Ovary (tissue), 10 donors: ENCODE measurements at regions of chr4 and their contacts with region 1.

Region 1: GRCh38 chr4:99324979-99325378 is 3.8 kb upstream of the ADH1B start:
- DNase-seq: peak; percentile 70 to 87 (median 81)
- H3K4me3 ChIP-seq: no peak overlapping the region
- H3K27ac ChIP-seq: peak overlapping the region in 1 of 2 donors; percentile 73
- H3K4me1 ChIP-seq: peaks cover 14% of the 10 kb centered on the region
- H3K27me3 ChIP-seq: no peaks in the 10 kb centered on the region
- CTCF ChIP-seq: no peak
- EP300 ChIP-seq: peak; percentile 52
- POLR2A ChIP-seq: no peak

Region 2: DNA sequence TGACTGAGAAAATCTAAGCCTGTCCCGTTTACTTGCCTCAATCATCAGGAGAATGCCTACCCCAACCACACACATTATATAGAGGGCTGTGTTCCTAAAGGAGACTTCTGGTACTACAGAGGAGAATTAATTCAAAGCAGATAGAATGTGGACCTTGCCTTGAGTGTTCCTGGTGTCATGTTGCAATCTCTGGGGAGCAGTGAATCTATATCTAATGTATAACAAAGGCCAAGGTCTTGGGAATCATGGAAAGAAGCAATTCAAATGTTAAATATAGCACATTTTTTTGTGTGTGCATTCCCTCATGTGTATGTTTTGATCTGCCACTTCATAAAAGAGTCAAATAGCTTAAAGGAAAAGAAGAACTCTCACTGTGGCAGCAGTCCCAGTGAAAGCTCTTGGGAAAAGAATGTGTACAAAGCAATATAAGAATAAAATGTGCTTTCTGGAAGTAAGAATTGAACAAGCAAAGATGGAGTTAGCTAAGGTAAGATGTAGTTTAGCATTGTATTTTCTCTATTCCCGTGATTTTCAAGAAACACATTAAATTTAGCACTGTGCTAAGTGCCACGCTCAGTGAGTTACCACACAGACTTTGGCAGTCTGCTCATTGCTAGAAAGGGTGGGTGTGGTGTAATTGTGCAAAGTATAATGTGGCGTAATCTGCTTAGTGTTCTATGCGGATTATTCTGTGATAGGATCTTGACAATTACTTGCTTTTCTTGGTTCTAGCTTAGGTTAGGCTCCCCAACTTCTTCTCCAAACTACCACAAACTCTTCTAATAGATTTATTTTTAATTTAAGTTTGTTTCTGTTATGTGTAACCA is 119.6 kb before region 1 on chr4:
- intact Hi-C with region 1: loop called in 1 of 4 experiments (anchors 10 kb)
- DNase-seq: peak in 2 of 5 donors; percentile 16 to 47
- H3K4me3 ChIP-seq: no peak overlapping the region
- H3K27ac ChIP-seq: no peak overlapping the region
- H3K4me1 ChIP-seq: peaks cover 7% of the 10 kb centered on the region
- H3K27me3 ChIP-seq: no peaks in the 10 kb centered on the region
- CTCF ChIP-seq: no peak
- EP300 ChIP-seq: no peak
- POLR2A ChIP-seq: no peak

Region 3: GRCh38 chr4:99352602-99353537 is 27.9 kb after region 1 on chr4 and contains the start of gene ADH1C:
- intact Hi-C with region 1: no loop called
- DNase-seq: no peak
- H3K4me3 ChIP-seq: peak within 1 kb of the TSS; percentile 0
- H3K27ac ChIP-seq: peak within 1 kb of the TSS in 1 of 2 donors; percentile 18
- H3K4me1 ChIP-seq: peaks cover 8% of the 10 kb centered on the region
- H3K27me3 ChIP-seq: no peaks in the 10 kb centered on the region
- CTCF ChIP-seq: no peak
- EP300 ChIP-seq: no peak
- POLR2A ChIP-seq: no peak
- total RNA-seq, gene ADH1C: 1.5 to 21.6 (median 7.0) TPM

Region 4: DNA sequence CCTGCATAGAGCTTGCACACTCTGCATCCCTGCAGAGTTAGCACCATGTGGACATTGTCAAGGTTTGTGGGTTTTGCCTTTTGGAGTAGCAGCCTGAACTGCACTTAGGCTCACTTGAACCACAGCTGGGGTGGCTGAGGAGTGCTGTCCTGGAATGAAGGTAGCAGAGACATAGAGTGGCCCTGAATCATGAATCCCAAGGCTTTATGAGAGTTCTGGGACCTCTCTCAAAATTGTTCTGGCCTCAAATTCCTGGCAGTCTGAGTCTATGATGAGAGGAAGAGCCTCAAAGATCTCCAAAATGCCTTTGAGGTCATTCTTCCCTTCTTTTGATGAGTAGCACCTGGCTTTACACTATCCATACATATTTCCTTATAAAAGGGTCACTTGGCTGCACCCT is 64.6 kb after region 1 on chr4:
- intact Hi-C with region 1: loop called in 2 of 4 experiments (anchors 5 to 10 kb)
- DNase-seq: no peak
- H3K4me3 ChIP-seq: no peak overlapping the region
- H3K27ac ChIP-seq: no peak overlapping the region
- H3K4me1 ChIP-seq: no peaks in the 10 kb centered on the region
- H3K27me3 ChIP-seq: no peaks in the 10 kb centered on the region
- CTCF ChIP-seq: no peak
- EP300 ChIP-seq: no peak
- POLR2A ChIP-seq: no peak

Region 5: GRCh38 chr4:99395595-99396364 is 70.8 kb after region 1 on chr4:
- intact Hi-C with region 1: loop called in 1 of 4 experiments (anchors 10 kb)
- DNase-seq: no peak
- H3K4me3 ChIP-seq: no peak overlapping the region
- H3K27ac ChIP-seq: peak overlapping the region; percentile 54 to 79
- H3K4me1 ChIP-seq: peaks cover 6% of the 10 kb centered on the region
- H3K27me3 ChIP-seq: no peaks in the 10 kb centered on the region
- CTCF ChIP-seq: no peak
- EP300 ChIP-seq: no peak
- POLR2A ChIP-seq: no peak